Naive thymus-derived CD4-positive, alpha-beta T cell (primary cell): ENCODE measurements at regions of chr5 and their contacts with region 1.

Region 1: GRCh38 chr5:142769741-142770631 is at the start of gene ARHGAP26:
- DNase-seq: peak; percentile 82 to 93 (median 87)
- ATAC-seq: peak; percentile 94
- H3K4me3 ChIP-seq: peak within 1 kb of the TSS; percentile 86
- H3K4me3 Mint-ChIP-seq: peak within 1 kb of the TSS; percentile 87 to 100 (median 96)
- H3K27ac ChIP-seq: peak within 1 kb of the TSS; percentile 77
- H3K27ac Mint-ChIP-seq: peak within 1 kb of the TSS; percentile 89 to 98 (median 92)
- H3K4me1 ChIP-seq: peaks cover 9 to 15% of the 10 kb centered on the region in 2 donors
- H3K4me1 Mint-ChIP-seq: peaks cover 30 to 39% (median 35%) of the 10 kb centered on the region in 7 donors
- H3K27me3 ChIP-seq: no peaks in the 10 kb centered on the region
- H3K27me3 Mint-ChIP-seq: peaks cover 0 to 3% (median 0%) of the 10 kb centered on the region in 5 donors
- total RNA-seq, gene ARHGAP26: 20.1 to 123 (median 29.1) TPM

Region 2: DNA sequence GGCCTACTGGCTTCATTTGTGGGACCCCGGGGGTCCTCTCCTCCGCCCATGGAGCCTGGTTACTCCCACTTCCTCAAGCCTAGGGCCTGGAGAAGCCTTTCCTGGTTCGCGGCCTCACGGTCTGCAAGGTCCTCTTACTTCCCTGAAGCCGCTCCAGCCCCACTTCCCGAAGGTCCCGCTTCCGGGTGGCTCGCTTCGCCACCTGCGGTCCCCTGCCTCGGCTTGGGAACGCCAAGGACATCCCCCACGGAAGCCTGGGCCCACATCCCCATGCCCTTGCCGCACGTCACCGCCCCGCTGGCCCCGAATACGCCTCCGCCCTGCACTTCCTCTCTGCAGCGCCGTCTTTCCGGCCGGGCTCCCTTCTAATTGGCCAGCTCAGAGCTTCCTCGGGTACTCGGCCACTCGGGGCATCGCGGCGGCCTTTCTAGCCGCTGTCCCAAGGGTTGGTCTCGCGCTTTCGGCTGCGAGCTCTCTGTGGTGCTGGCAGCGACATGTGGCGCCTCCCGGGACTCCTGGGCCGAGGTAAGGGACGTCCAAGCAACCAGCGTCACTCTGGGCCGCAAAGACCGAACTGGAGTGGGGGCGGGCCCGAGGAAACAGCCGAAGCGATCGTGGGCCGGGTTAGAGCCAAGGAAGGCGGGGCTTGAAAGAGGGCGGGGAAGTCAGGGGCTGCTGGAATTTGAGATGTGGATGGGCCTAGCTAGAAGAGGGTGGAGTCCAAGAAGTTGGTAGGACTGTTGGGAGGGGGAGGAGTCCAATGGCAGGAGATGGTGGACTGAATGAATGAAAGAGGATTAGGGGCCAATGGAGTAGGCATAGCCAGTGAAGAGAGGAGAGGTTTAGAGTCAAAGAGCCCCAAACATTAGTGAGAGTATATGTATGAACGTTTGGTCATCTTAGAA is 846.3 kb before region 1 on chr5 and contains the start of gene DELE1:
- CTCF ChIA-PET with region 1: no interaction called
- POLR2A ChIA-PET with region 1: no interaction called
- intact Hi-C with region 1: loop called in 1 of 2 experiments (anchors 5 kb)
- DNase-seq: peak; percentile 79 to 92 (median 90)
- ATAC-seq: peak; percentile 97
- H3K4me3 ChIP-seq: peak within 1 kb of the TSS; percentile 81
- H3K4me3 Mint-ChIP-seq: peak within 1 kb of the TSS; percentile 88 to 98 (median 94)
- H3K27ac ChIP-seq: peak within 1 kb of the TSS; percentile 98
- H3K27ac Mint-ChIP-seq: peak within 1 kb of the TSS; percentile 87 to 99 (median 98)
- H3K4me1 ChIP-seq: peaks cover 10 to 14% of the 10 kb centered on the region in 2 donors
- H3K4me1 Mint-ChIP-seq: peaks cover 23 to 54% (median 36%) of the 10 kb centered on the region in 7 donors
- H3K27me3 ChIP-seq: no peaks in the 10 kb centered on the region
- H3K27me3 Mint-ChIP-seq: no peaks in the 10 kb centered on the region
- total RNA-seq, gene DELE1: 77.3 to 101 (median 88.2) TPM

Region 3: DNA sequence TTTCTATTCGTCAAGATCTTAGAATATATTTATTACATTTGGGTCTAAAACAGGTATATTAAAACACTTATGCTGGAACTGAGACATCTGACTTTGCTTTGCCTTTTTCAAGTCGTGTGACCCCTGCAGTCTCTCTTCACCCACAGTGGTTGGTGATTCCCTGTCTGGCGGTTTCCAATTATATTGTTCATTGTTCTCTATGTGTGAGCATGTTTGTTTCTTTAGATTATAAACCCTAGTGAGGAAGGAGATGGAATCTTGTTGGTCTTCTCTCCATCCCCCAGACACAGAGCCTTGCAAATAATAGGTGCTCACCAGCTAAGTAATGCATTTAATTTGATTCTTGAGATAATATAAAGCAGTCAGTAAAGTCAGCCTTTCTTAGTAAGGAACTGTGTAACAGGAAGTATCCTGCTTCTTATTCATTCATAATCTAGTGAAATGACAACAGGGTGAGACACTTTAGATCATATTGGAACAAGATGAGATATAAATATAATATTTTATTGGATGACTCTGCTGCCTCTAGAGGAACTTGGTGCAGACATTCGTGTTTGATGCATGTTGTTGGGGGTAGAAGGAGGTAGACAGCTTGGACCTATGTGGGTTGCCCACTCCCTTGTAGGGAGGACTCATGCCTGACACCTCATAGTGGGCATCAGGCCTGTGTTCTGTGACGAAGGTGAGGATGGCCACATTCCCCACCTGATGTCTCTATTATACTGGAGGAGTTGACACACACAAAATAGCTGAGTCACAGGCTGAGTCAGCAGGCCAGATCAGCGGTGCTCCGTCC is 172.2 kb before region 1 on chr5:
- CTCF ChIA-PET with region 1: no interaction called
- POLR2A ChIA-PET with region 1: no interaction called
- intact Hi-C with region 1: no loop called
- DNase-seq: no peak
- ATAC-seq: no peak
- H3K4me3 ChIP-seq: no peak overlapping the region
- H3K4me3 Mint-ChIP-seq: no peak overlapping the region
- H3K27ac ChIP-seq: no peak overlapping the region
- H3K27ac Mint-ChIP-seq: no peak overlapping the region
- H3K4me1 ChIP-seq: no peaks in the 10 kb centered on the region
- H3K4me1 Mint-ChIP-seq: no peaks in the 10 kb centered on the region
- H3K27me3 ChIP-seq: no peaks in the 10 kb centered on the region
- H3K27me3 Mint-ChIP-seq: peaks cover 2 to 53% (median 20%) of the 10 kb centered on the region in 5 donors

Region 4: GRCh38 chr5:142737179-142737578 is 32.8 kb before region 1 on chr5:
- CTCF ChIA-PET with region 1: no interaction called
- POLR2A ChIA-PET with region 1: no interaction called
- intact Hi-C with region 1: no loop called
- DNase-seq: no peak
- ATAC-seq: peak; percentile 59
- H3K4me3 ChIP-seq: no peak overlapping the region
- H3K4me3 Mint-ChIP-seq: no peak overlapping the region
- H3K27ac ChIP-seq: no peak overlapping the region
- H3K27ac Mint-ChIP-seq: no peak overlapping the region
- H3K4me1 ChIP-seq: peaks cover 7 to 33% of the 10 kb centered on the region in 2 donors
- H3K4me1 Mint-ChIP-seq: peaks cover 6 to 22% (median 13%) of the 10 kb centered on the region in 7 donors
- H3K27me3 ChIP-seq: no peaks in the 10 kb centered on the region
- H3K27me3 Mint-ChIP-seq: peaks cover 0 to 15% (median 0%) of the 10 kb centered on the region in 5 donors

Region 5: GRCh38 chr5:142748568-142749249 is 21.3 kb before region 1 on chr5:
- CTCF ChIA-PET with region 1: interaction called, 13 read pairs
- POLR2A ChIA-PET with region 1: interaction called, 5 read pairs
- intact Hi-C with region 1: loop called in 1 of 2 experiments (anchors 1 kb)
- DNase-seq: peak in 8 of 9 donors; percentile 13 to 67 (median 54)
- ATAC-seq: peak; percentile 67
- H3K4me3 ChIP-seq: no peak overlapping the region
- H3K4me3 Mint-ChIP-seq: no peak overlapping the region
- H3K27ac ChIP-seq: no peak overlapping the region
- H3K27ac Mint-ChIP-seq: no peak overlapping the region
- H3K4me1 ChIP-seq: no peaks in the 10 kb centered on the region
- H3K4me1 Mint-ChIP-seq: peaks cover 0 to 17% (median 0%) of the 10 kb centered on the region in 7 donors
- H3K27me3 ChIP-seq: no peaks in the 10 kb centered on the region
- H3K27me3 Mint-ChIP-seq: peaks cover 0 to 14% (median 0%) of the 10 kb centered on the region in 5 donors

Region 6: DNA sequence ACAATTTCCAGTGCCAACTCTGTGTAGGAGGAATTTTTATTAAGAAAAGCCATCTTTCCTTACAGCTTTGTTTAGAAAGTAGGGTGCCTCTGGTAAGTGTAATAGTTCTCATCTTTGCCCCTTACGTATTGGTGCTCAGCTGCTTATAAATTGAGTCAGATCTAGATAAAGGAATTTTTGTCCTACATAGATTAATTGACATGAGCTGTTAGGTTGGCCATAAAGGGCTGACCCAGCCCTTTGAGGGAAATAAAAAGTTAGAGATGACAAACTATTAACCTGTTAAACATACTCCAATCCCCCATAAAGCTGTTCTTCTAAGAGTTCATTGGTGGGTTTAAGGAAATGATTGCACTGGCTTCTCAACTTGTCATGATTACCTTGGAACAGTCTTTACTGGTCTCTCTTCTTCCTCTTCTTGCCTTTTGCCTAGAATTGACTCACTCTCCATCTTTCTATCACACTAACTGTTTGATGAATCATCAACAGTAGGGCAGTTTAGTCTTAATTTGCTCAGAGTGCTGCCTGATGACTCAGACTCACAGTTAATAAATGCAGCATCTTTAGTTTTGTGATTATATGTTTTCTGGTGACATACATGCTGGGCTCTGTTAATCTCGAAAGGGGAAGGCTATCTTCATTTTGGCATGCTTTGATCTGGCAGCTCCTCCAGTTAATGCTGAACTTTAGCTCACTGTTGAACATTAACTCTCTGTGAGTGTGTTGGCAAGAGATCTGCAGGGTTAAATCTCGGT is 51.9 kb after region 1 on chr5:
- CTCF ChIA-PET with region 1: no interaction called
- POLR2A ChIA-PET with region 1: no interaction called
- intact Hi-C with region 1: loop called in 1 of 2 experiments (anchors 10 kb)
- DNase-seq: no peak
- ATAC-seq: peak; percentile 80
- H3K4me3 ChIP-seq: no peak overlapping the region
- H3K4me3 Mint-ChIP-seq: no peak overlapping the region
- H3K27ac ChIP-seq: no peak overlapping the region
- H3K27ac Mint-ChIP-seq: peak overlapping the region in 1 of 9 donors; percentile 1
- H3K4me1 ChIP-seq: peaks cover 0 to 24% of the 10 kb centered on the region in 2 donors
- H3K4me1 Mint-ChIP-seq: peaks cover 12 to 59% (median 36%) of the 10 kb centered on the region in 7 donors
- H3K27me3 ChIP-seq: no peaks in the 10 kb centered on the region
- H3K27me3 Mint-ChIP-seq: no peaks in the 10 kb centered on the region

Region 7: DNA sequence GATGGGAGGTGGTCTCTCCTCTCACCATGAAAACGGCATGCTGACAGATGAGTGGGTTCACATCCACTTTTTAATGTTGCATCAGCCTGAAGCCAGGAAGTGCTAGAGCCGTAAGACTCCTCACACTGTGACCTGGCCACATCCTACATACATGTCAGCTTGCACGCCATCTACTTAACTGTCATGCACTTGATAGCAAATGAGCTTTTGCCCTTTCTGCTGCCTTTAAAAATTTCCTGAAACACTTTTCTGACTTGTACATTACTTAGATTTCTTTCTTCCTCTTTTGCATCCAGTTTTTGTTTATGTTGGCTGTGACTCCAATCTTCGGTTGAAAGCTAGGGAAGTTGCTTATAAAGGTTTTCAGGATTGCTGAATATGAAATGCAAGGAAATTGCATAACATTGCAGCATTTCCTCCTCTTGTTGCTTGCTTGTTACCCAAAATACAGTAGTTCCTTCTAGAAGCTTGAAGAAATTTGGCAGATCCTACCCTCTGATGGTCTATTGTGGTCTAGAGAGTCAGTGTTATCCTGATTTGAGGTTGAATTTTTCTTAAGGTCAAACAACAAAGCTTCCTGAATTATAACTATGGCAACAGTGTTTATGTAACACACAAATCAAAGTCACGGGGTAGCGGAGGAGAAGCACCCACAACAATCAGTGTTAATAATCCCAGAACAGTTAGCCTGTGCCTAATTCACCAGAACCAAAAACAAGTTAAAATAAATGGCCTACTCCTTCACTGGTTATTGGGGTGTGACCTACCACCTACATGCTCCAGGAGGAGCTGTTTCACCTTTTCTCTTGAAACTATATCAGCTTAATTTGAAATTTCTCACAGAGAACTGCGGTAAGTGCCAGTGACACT is 232.7 kb after region 1 on chr5:
- CTCF ChIA-PET with region 1: no interaction called
- POLR2A ChIA-PET with region 1: no interaction called
- intact Hi-C with region 1: loop called (anchors 5 to 10 kb)
- DNase-seq: peak in 8 of 9 donors; percentile 40 to 66 (median 50)
- ATAC-seq: peak; percentile 86
- H3K4me3 ChIP-seq: peak overlapping the region; percentile 3
- H3K4me3 Mint-ChIP-seq: peak overlapping the region; percentile 22 to 80 (median 62)
- H3K27ac ChIP-seq: peak overlapping the region; percentile 68
- H3K27ac Mint-ChIP-seq: peak overlapping the region; percentile 78 to 98 (median 90)
- H3K4me1 ChIP-seq: peaks cover 31 to 66% of the 10 kb centered on the region in 2 donors
- H3K4me1 Mint-ChIP-seq: peaks cover 37 to 90% (median 50%) of the 10 kb centered on the region in 7 donors
- H3K27me3 ChIP-seq: no peaks in the 10 kb centered on the region
- H3K27me3 Mint-ChIP-seq: no peaks in the 10 kb centered on the region